CD4-positive, alpha-beta T cell (primary cell): ENCODE measurements at regions of chr19 and their contacts with region 1.

Region 1: GRCh38 chr19:51473009-51473707 is 5.2 kb upstream of the CEACAM18 start:
- DNase-seq: peak; percentile 57 to 87 (median 76)
- ATAC-seq: peak; percentile 62
- H3K4me3 ChIP-seq: no peak overlapping the region
- H3K4me3 Mint-ChIP-seq: no peak overlapping the region
- H3K27ac ChIP-seq: no peak overlapping the region
- H3K27ac Mint-ChIP-seq: no peak overlapping the region
- H3K4me1 ChIP-seq: peaks cover 2% of the 10 kb centered on the region
- H3K4me1 Mint-ChIP-seq: no peaks in the 10 kb centered on the region
- H3K27me3 ChIP-seq: peaks cover 7 to 8% of the 10 kb centered on the region in 2 experiments
- H3K27me3 Mint-ChIP-seq: peaks cover 20% of the 10 kb centered on the region
- CTCF ChIP-seq: peak; percentile 96

Region 2: DNA sequence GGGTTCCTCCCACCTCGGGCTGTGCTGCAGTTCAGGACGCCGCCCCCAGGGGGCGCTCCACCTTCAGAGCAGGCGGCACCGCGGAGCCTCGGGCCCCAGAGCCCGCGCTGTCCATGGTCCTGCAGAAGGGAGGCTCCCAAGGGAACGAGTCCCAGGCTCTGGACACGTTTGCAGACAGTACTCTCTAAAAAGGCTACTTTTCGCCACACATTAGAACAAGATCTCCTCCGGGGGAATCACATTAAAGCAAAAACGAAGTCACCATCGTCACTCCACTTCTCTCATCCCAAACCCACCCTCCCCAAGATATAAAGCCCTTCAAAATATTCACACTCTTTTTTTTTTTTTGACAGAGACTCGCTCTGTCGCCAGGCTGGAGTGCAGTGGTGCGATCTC is 51.1 kb before region 1 on chr19:
- CTCF ChIA-PET with region 1: interaction called, 4 read pairs
- POLR2A ChIA-PET with region 1: no interaction called
- intact Hi-C with region 1: loop called in 1 of 2 experiments (anchors 2 kb)
- DNase-seq: peak; percentile 61 to 89 (median 78)
- ATAC-seq: peak; percentile 79
- H3K4me3 ChIP-seq: no peak overlapping the region
- H3K4me3 Mint-ChIP-seq: no peak overlapping the region
- H3K27ac ChIP-seq: no peak overlapping the region
- H3K27ac Mint-ChIP-seq: no peak overlapping the region
- H3K4me1 ChIP-seq: peaks cover 16% of the 10 kb centered on the region
- H3K4me1 Mint-ChIP-seq: no peaks in the 10 kb centered on the region
- H3K27me3 ChIP-seq: peaks cover 7 to 13% of the 10 kb centered on the region in 2 experiments
- H3K27me3 Mint-ChIP-seq: peaks cover 35% of the 10 kb centered on the region
- CTCF ChIP-seq: peak; percentile 96

Region 3: DNA sequence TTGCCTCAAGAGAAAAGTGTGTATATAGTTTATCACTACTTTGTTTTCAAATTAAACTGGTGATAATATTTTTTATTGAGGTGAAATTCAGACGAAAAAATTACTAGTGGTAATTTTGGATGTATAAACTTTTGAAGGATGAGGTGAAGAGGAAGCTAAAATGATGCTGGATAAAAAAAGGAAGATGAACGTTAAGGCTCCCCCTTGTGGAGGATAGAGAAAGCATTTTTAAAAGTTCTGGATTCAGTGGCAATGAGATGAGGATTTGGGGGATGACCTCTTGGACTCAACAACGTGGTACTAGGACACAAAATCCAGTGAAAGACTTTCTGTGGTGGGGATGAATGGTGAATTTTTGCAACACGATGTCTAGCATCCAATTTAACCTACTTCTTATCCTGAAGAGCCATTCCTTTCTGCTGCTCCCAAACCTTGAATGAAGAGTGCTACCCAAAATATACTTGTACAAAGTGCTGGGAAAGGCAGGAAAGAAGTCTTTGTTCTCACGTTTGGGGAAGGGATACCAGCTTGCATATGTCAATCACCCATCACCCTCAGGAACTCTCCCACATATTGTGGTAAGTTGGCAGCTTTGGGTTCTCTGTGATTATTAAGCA is 164.3 kb after region 1 on chr19:
- CTCF ChIA-PET with region 1: no interaction called
- POLR2A ChIA-PET with region 1: no interaction called
- intact Hi-C with region 1: loop called in 1 of 2 experiments (anchors 1 kb)
- DNase-seq: peak in 2 of 14 experiments; percentile 28 to 30
- ATAC-seq: no peak
- H3K4me3 ChIP-seq: no peak overlapping the region
- H3K4me3 Mint-ChIP-seq: no peak overlapping the region
- H3K27ac ChIP-seq: no peak overlapping the region
- H3K27ac Mint-ChIP-seq: no peak overlapping the region
- H3K4me1 ChIP-seq: no peaks in the 10 kb centered on the region
- H3K4me1 Mint-ChIP-seq: no peaks in the 10 kb centered on the region
- H3K27me3 ChIP-seq: peaks cover 0 to 7% of the 10 kb centered on the region in 2 experiments
- H3K27me3 Mint-ChIP-seq: peaks cover 50% of the 10 kb centered on the region
- CTCF ChIP-seq: peak; percentile 57

Region 4: GRCh38 chr19:51660975-51661600 is 187.9 kb after region 1 on chr19:
- CTCF ChIA-PET with region 1: interaction called, 8 read pairs
- POLR2A ChIA-PET with region 1: no interaction called
- intact Hi-C with region 1: loop called (anchors 1 to 2 kb)
- DNase-seq: peak in 11 of 14 experiments; percentile 17 to 75 (median 29)
- ATAC-seq: no peak
- H3K4me3 ChIP-seq: no peak overlapping the region
- H3K4me3 Mint-ChIP-seq: no peak overlapping the region
- H3K27ac ChIP-seq: no peak overlapping the region
- H3K27ac Mint-ChIP-seq: no peak overlapping the region
- H3K4me1 ChIP-seq: peaks cover 3% of the 10 kb centered on the region
- H3K4me1 Mint-ChIP-seq: peaks cover 4% of the 10 kb centered on the region
- H3K27me3 ChIP-seq: peaks cover 0 to 15% of the 10 kb centered on the region in 2 experiments
- H3K27me3 Mint-ChIP-seq: peaks cover 46% of the 10 kb centered on the region
- CTCF ChIP-seq: no peak

Region 5: GRCh38 chr19:51777570-51778462 is 304.7 kb after region 1 on chr19:
- CTCF ChIA-PET with region 1: interaction called, 6 read pairs
- POLR2A ChIA-PET with region 1: no interaction called
- intact Hi-C with region 1: loop called (anchors 1 kb)
- DNase-seq: peak; percentile 4 to 83 (median 18)
- ATAC-seq: peak; percentile 48
- H3K4me3 ChIP-seq: no peak overlapping the region
- H3K4me3 Mint-ChIP-seq: no peak overlapping the region
- H3K27ac ChIP-seq: no peak overlapping the region
- H3K27ac Mint-ChIP-seq: no peak overlapping the region
- H3K4me1 ChIP-seq: no peaks in the 10 kb centered on the region
- H3K4me1 Mint-ChIP-seq: no peaks in the 10 kb centered on the region
- H3K27me3 ChIP-seq: peaks cover 5 to 9% of the 10 kb centered on the region in 2 experiments
- H3K27me3 Mint-ChIP-seq: peaks cover 87% of the 10 kb centered on the region
- CTCF ChIP-seq: peak; percentile 66

Region 6: GRCh38 chr19:52237771-52238400 is 764.7 kb after region 1 on chr19:
- CTCF ChIA-PET with region 1: no interaction called
- POLR2A ChIA-PET with region 1: no interaction called
- intact Hi-C with region 1: loop called in 1 of 2 experiments (anchors 5 kb)
- DNase-seq: peak; percentile 25 to 79 (median 46)
- ATAC-seq: peak; percentile 89
- H3K4me3 ChIP-seq: no peak overlapping the region
- H3K4me3 Mint-ChIP-seq: no peak overlapping the region
- H3K27ac ChIP-seq: no peak overlapping the region
- H3K27ac Mint-ChIP-seq: no peak overlapping the region
- H3K4me1 ChIP-seq: no peaks in the 10 kb centered on the region
- H3K4me1 Mint-ChIP-seq: no peaks in the 10 kb centered on the region
- H3K27me3 ChIP-seq: no peaks in the 10 kb centered on the region
- H3K27me3 Mint-ChIP-seq: no peaks in the 10 kb centered on the region
- CTCF ChIP-seq: peak; percentile 96